CD8-positive, alpha-beta T cell (primary cell): ENCODE measurements at regions of chr10 and their contacts with region 1.

Region 1: GRCh38 chr10:102461187-102462054 is 10.1 kb upstream of the C10orf95 start:
- DNase-seq: peak; percentile 85 to 96 (median 93)
- ATAC-seq: peak; percentile 99
- H3K4me3 ChIP-seq: peak overlapping the region; percentile 67 to 76
- H3K4me3 Mint-ChIP-seq: peak overlapping the region; percentile 89
- H3K27ac ChIP-seq: peak overlapping the region in 1 of 2 experiments; percentile 59
- H3K27ac Mint-ChIP-seq: peak overlapping the region; percentile 79
- H3K4me1 ChIP-seq: peaks cover 20% of the 10 kb centered on the region
- H3K4me1 Mint-ChIP-seq: peaks cover 35% of the 10 kb centered on the region
- H3K27me3 ChIP-seq: no peaks in the 10 kb centered on the region
- H3K27me3 Mint-ChIP-seq: no peaks in the 10 kb centered on the region
- CTCF ChIP-seq: no peak

Region 2: GRCh38 chr10:102245101-102245931 is 216.1 kb before region 1 on chr10 and contains the start of gene GBF1:
- CTCF ChIA-PET with region 1: no interaction called
- POLR2A ChIA-PET with region 1: no interaction called
- intact Hi-C with region 1: loop called in 1 of 2 experiments (anchors 1 kb)
- DNase-seq: peak; percentile 75 to 98 (median 87)
- ATAC-seq: peak; percentile 84
- H3K4me3 ChIP-seq: peak within 1 kb of the TSS; percentile 82 to 95
- H3K4me3 Mint-ChIP-seq: peak within 1 kb of the TSS; percentile 94
- H3K27ac ChIP-seq: peak within 1 kb of the TSS; percentile 89 to 93
- H3K27ac Mint-ChIP-seq: peak within 1 kb of the TSS; percentile 92
- H3K4me1 ChIP-seq: peaks cover 44% of the 10 kb centered on the region
- H3K4me1 Mint-ChIP-seq: peaks cover 54% of the 10 kb centered on the region
- H3K27me3 ChIP-seq: peaks cover 10 to 22% of the 10 kb centered on the region in 2 experiments
- H3K27me3 Mint-ChIP-seq: peaks cover 19% of the 10 kb centered on the region
- CTCF ChIP-seq: no peak
- total RNA-seq, gene GBF1: 26.7 to 31.3 TPM

Region 3: DNA sequence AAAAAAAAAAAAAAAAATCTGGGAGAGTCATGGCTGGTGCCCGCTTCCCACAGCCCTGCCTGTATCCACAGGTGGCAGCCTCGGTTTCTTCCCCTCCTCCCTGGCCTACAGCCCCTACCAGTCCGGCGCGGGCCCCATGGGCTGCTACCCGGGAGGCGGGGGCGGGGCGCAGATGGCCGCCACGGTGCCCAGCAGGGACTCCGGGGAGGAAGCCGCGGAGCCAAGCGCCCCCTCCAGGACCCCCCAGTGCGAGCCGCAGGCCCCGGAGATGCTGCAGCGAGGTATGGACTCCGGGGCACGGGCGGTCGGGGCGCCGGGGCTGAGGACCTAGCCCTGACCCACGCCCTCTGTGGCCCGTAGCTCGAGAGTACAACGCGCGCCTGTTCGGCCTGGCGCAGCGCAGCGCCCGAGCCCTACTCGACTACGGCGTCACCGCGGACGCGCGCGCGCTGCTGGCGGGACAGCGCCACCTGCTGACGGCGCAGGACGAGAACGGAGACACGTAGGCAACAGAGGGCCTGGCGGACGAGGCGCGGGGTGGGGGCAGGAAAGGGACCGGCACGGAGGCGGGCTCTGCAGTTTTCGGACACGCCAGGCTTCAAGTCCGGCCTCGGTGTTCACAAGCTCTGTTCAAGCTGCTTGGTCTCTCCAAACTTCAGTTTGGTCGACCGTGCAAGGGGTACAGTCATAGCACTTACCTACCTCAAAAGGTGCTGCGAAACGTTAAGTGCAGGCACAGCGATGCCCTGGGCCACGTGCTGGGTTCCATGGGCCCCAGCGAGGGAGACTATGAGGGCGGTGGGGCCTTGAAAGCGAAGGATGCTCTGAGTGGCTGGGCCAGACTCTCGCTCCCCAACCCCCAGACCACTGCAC is 62.0 kb before region 1 on chr10:
- CTCF ChIA-PET with region 1: interaction called, 10 read pairs
- POLR2A ChIA-PET with region 1: interaction called, 6 read pairs
- intact Hi-C with region 1: loop called (anchors 1 to 5 kb)
- DNase-seq: peak; percentile 78 to 95 (median 87)
- ATAC-seq: peak; percentile 51
- H3K4me3 ChIP-seq: peak overlapping the region; percentile 44 to 65
- H3K4me3 Mint-ChIP-seq: peak overlapping the region; percentile 76
- H3K27ac ChIP-seq: peak overlapping the region; percentile 59 to 86
- H3K27ac Mint-ChIP-seq: peak overlapping the region; percentile 81
- H3K4me1 ChIP-seq: peaks cover 30% of the 10 kb centered on the region
- H3K4me1 Mint-ChIP-seq: peaks cover 38% of the 10 kb centered on the region
- H3K27me3 ChIP-seq: no peaks in the 10 kb centered on the region
- H3K27me3 Mint-ChIP-seq: no peaks in the 10 kb centered on the region
- CTCF ChIP-seq: peak; percentile 89

Region 4: DNA sequence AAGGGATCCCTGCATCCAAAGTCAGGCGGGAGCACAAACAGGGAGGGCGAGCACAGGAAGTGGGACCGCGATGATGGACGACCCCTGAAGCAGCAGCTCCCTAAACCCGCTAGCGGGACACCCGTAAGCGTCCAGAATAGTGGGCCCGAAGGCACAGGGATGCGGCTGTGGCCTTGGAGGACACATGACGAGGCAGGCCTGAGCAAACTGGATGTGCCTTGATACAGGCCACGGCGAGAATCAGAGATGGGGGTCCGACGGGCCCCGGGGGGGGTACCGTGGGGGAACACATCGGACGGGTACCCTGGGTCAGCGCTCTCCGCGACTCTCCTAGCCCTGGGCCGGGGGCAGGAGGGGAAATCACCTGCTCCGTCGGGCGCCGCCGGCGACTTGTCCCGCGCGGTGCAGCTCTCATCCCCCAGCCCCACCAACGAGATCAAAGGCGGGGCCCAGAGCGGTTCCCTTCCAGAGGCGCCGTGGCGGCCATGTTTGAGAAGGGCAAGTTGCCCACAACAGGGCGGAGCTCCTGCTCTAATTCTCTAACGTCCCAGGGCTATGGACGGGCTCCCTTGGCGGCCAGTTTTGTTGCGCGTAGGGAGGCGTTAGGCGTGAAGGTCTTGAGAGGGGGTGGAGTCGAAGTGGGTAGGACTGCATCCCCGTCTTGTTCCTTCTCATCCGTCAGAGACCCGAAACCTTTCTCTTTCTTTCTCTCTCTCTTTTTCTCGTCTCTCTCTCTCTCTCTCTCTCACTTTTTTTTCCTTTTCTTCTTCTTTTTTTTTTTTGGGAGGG is 29.1 kb before region 1 on chr10 and contains the start of gene CUEDC2:
- CTCF ChIA-PET with region 1: interaction called, 3 read pairs
- POLR2A ChIA-PET with region 1: interaction called, 14 read pairs
- intact Hi-C with region 1: loop called in 1 of 2 experiments (anchors 1 kb)
- DNase-seq: peak; percentile 88 to 98 (median 93)
- ATAC-seq: peak; percentile 93
- H3K4me3 ChIP-seq: peak within 1 kb of the TSS; percentile 76 to 96
- H3K4me3 Mint-ChIP-seq: peak within 1 kb of the TSS; percentile 95
- H3K27ac ChIP-seq: peak within 1 kb of the TSS; percentile 62 to 67
- H3K27ac Mint-ChIP-seq: peak within 1 kb of the TSS; percentile 89
- H3K4me1 ChIP-seq: peaks cover 48% of the 10 kb centered on the region
- H3K4me1 Mint-ChIP-seq: peaks cover 49% of the 10 kb centered on the region
- H3K27me3 ChIP-seq: no peaks in the 10 kb centered on the region
- H3K27me3 Mint-ChIP-seq: no peaks in the 10 kb centered on the region
- CTCF ChIP-seq: no peak
- total RNA-seq, gene CUEDC2: 24.2 to 27.0 TPM

Region 5: DNA sequence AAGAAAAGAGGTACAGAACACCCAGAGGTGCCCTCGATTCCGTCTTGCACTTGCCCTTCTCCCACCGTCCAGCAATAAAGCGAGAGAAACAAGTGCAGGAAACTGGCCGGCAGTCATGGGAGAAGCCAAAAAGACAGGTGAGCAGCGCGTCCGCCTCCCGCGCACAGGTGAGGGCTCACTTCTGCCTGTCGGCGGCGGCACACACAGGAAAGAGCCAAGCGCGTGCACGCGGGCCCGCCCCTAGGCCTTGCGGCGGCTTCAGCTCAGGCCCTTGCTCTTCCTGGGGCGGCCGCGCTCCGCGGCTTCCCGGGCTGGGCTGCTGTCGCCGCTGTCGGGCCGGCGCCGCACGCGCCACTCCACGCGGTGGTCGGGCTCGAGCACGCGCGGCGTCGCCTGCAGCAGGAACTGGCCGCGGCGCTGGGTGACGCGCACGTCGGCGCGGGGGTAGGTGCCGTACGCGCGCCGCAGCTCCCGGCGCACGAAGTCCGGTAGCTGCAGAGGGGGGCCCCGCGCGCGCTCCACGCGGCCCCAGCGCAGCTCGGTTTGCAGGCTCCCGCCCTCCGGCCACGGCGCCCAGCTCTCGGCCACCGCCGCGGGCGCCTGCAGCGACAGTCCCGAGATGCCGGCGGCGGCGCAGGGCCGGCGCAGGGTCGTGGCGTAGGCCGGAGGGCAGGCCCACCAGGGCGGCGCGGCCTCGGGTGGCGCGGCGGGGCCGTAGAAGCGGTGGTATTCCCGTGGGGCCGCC is 11.1 kb before region 1 on chr10:
- CTCF ChIA-PET with region 1: interaction called, 23 read pairs
- POLR2A ChIA-PET with region 1: interaction called, 40 read pairs
- intact Hi-C with region 1: loop called (anchors 1 kb)
- DNase-seq: peak; percentile 78 to 98 (median 89)
- ATAC-seq: peak; percentile 77
- H3K4me3 ChIP-seq: peak overlapping the region; percentile 73 to 92
- H3K4me3 Mint-ChIP-seq: peak overlapping the region; percentile 92
- H3K27ac ChIP-seq: peak overlapping the region; percentile 76 to 88
- H3K27ac Mint-ChIP-seq: peak overlapping the region; percentile 94
- H3K4me1 ChIP-seq: peaks cover 16% of the 10 kb centered on the region
- H3K4me1 Mint-ChIP-seq: peaks cover 23% of the 10 kb centered on the region
- H3K27me3 ChIP-seq: no peaks in the 10 kb centered on the region
- H3K27me3 Mint-ChIP-seq: no peaks in the 10 kb centered on the region
- CTCF ChIP-seq: no peak

Region 6: GRCh38 chr10:102497545-102497944 is 36.1 kb after region 1 on chr10:
- CTCF ChIA-PET with region 1: no interaction called
- POLR2A ChIA-PET with region 1: no interaction called
- intact Hi-C with region 1: loop called (anchors 1 kb)
- DNase-seq: no peak
- ATAC-seq: no peak
- H3K4me3 ChIP-seq: no peak overlapping the region
- H3K4me3 Mint-ChIP-seq: no peak overlapping the region
- H3K27ac ChIP-seq: no peak overlapping the region
- H3K27ac Mint-ChIP-seq: no peak overlapping the region
- H3K4me1 ChIP-seq: peaks cover 7% of the 10 kb centered on the region
- H3K4me1 Mint-ChIP-seq: peaks cover 39% of the 10 kb centered on the region
- H3K27me3 ChIP-seq: no peaks in the 10 kb centered on the region
- H3K27me3 Mint-ChIP-seq: no peaks in the 10 kb centered on the region
- CTCF ChIP-seq: no peak

Region 7: GRCh38 chr10:102511583-102512274 is 50.3 kb after region 1 on chr10:
- CTCF ChIA-PET with region 1: no interaction called
- POLR2A ChIA-PET with region 1: no interaction called
- intact Hi-C with region 1: no loop called
- DNase-seq: peak in 1 of 9 experiments; percentile 15
- ATAC-seq: no peak
- H3K4me3 ChIP-seq: no peak overlapping the region
- H3K4me3 Mint-ChIP-seq: no peak overlapping the region
- H3K27ac ChIP-seq: no peak overlapping the region
- H3K27ac Mint-ChIP-seq: peak overlapping the region; percentile 41
- H3K4me1 ChIP-seq: peaks cover 9% of the 10 kb centered on the region
- H3K4me1 Mint-ChIP-seq: peaks cover 26% of the 10 kb centered on the region
- H3K27me3 ChIP-seq: no peaks in the 10 kb centered on the region
- H3K27me3 Mint-ChIP-seq: no peaks in the 10 kb centered on the region
- CTCF ChIP-seq: no peak